ENCODE measurements at regions of chr6 and their contacts with region 1.

Region 1: GRCh38 chr6:31068669-31069340 is 43.6 kb downstream of the C6orf15 start:
- DNase-seq: peak; percentile 61 to 84
- ATAC-seq: peak; percentile 96

Region 2: DNA sequence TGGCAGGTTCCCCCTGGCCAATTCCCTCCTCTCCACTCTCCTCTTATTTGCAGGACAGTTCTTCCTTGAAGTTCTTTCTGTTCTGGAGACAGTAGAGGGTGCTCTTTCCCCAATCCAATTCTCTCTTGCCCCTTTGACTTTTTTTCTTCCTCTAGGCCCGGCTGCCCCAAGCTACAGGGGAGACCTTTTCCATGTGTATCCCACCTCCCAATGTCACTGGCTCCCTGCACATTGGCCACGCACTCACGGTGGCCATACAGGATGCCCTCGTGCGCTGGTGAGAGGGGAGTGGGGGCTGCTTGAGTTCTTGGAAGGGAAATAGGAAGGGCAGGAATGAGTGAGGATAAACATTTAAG is 153.2 kb before region 1 on chr6:
- intact Hi-C with region 1: loop called in 1 of 2 experiments (anchors 5 kb)
- DNase-seq: peak in 1 of 2 donors; percentile 13
- ATAC-seq: peak; percentile 30

Region 3: DNA sequence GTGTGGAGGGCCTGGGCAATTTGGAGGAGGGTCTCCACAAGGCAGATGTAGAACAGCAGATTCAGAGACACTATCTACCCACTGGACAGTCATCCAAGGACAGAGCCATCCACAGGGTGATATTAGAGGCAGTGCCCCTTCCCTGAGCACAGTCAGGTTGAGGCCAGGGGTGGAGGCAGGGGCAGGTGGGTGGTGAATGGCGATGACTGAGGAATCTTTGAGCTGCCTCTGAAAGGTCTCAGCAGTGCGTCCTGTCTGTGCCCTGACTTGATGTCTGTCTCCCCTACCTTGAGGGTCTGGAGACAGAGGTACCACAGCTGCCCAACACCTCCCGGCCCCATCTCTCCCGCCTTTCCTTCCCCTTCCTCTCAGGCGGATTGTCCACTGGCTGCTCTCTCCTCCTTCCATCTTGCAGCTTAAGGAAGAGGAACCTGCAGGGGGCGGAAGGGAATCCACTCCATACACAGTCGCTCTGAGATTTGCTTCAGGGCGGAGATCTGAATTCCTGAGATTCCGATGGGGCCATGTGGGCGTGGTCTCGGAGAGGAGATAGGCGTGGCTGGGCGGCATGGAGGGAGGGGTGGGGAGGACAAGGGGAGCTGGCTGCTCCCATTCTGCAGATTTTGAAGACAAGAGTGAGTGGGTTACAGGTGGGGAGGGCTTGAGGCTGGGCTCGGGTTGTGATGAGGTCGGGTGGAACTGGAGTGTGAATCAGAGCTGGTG is 126.3 kb before region 1 on chr6:
- intact Hi-C with region 1: loop called in 1 of 2 experiments (anchors 10 kb)
- DNase-seq: peak; percentile 69 to 75
- ATAC-seq: peak; percentile 87